ENCODE measurements at regions of chr4 and their contacts with region 1.

Region 1: GRCh38 chr4:5050520-5051277 is 581 bp upstream of the STK32B start:
- H3K4me3 Mint-ChIP-seq: peak overlapping the region; percentile 85
- H3K27ac Mint-ChIP-seq: peak overlapping the region; percentile 80
- H3K4me1 Mint-ChIP-seq: peaks cover 37% of the 10 kb centered on the region
- H3K27me3 Mint-ChIP-seq: peaks cover 20% of the 10 kb centered on the region

Region 2: DNA sequence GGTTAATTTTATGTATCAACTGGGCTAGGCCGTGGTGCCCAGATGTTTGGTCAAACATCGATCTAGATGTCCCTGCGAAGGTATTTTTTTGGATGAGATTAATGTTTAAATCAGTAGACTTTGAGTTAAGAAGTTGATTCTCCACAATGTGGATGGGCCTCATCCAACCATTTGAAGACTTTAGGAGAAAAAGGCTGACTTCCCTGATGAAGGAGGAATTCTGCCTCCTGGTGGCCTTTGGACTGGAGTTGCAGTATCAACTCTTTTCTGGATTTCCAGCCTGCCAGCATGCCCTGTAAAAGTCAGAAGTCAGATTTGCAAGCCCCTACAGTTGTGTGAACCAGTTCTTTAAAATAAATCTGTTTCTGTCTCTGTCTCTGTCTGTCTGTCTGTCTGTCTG is 92.0 kb after region 1 on chr4:
- intact Hi-C with region 1: loop called (anchors 1 kb)
- H3K4me3 Mint-ChIP-seq: no peak overlapping the region
- H3K27ac Mint-ChIP-seq: no peak overlapping the region
- H3K4me1 Mint-ChIP-seq: no peaks in the 10 kb centered on the region
- H3K27me3 Mint-ChIP-seq: no peaks in the 10 kb centered on the region

Region 3: GRCh38 chr4:5460116-5460801 is 409.6 kb after region 1 on chr4:
- intact Hi-C with region 1: loop called (anchors 2 kb)
- H3K4me3 Mint-ChIP-seq: no peak overlapping the region
- H3K27ac Mint-ChIP-seq: no peak overlapping the region
- H3K4me1 Mint-ChIP-seq: no peaks in the 10 kb centered on the region
- H3K27me3 Mint-ChIP-seq: no peaks in the 10 kb centered on the region